CD4-positive, alpha-beta memory T cell (primary cell): ENCODE measurements at regions of chr6 and their contacts with region 1.

Region 1: GRCh38 chr6:44096612-44097011 is 30.6 kb downstream of the MRPL14 start:
- DNase-seq: peak; percentile 67 to 76 (median 70)
- H3K4me3 ChIP-seq: no peak overlapping the region
- H3K4me3 Mint-ChIP-seq: no peak overlapping the region
- H3K27ac ChIP-seq: no peak overlapping the region
- H3K27ac Mint-ChIP-seq: peak overlapping the region in 3 of 7 donors; percentile 5 to 77 (median 70)
- H3K4me1 ChIP-seq: no peaks in the 10 kb centered on the region
- H3K4me1 Mint-ChIP-seq: peaks cover under 1 to 7% (median 5%) of the 10 kb centered on the region in 4 donors
- H3K27me3 ChIP-seq: no peaks in the 10 kb centered on the region
- H3K27me3 Mint-ChIP-seq: no peaks in the 10 kb centered on the region

Region 2: GRCh38 chr6:44142835-44143234 is 46.2 kb after region 1 on chr6:
- CTCF ChIA-PET with region 1: interaction called, 11 read pairs
- POLR2A ChIA-PET with region 1: no interaction called
- intact Hi-C with region 1: no loop called
- DNase-seq: no peak
- H3K4me3 ChIP-seq: no peak overlapping the region
- H3K4me3 Mint-ChIP-seq: no peak overlapping the region
- H3K27ac ChIP-seq: no peak overlapping the region
- H3K27ac Mint-ChIP-seq: peak overlapping the region in 2 of 7 donors; percentile 22 to 71
- H3K4me1 ChIP-seq: no peaks in the 10 kb centered on the region
- H3K4me1 Mint-ChIP-seq: peaks cover 0 to 2% (median 0%) of the 10 kb centered on the region in 4 donors
- H3K27me3 ChIP-seq: no peaks in the 10 kb centered on the region
- H3K27me3 Mint-ChIP-seq: no peaks in the 10 kb centered on the region

Region 3: GRCh38 chr6:44151348-44152108 is 54.9 kb after region 1 on chr6:
- CTCF ChIA-PET with region 1: interaction called, 50 read pairs
- POLR2A ChIA-PET with region 1: interaction called, 3 read pairs
- intact Hi-C with region 1: loop called (anchors 1 kb)
- DNase-seq: peak; percentile 72 to 80 (median 72)
- H3K4me3 ChIP-seq: no peak overlapping the region
- H3K4me3 Mint-ChIP-seq: peak overlapping the region in 3 of 8 donors; percentile 43 to 73 (median 55)
- H3K27ac ChIP-seq: no peak overlapping the region
- H3K27ac Mint-ChIP-seq: peak overlapping the region in 4 of 7 donors; percentile 18 to 59 (median 28)
- H3K4me1 ChIP-seq: peaks cover 16% of the 10 kb centered on the region
- H3K4me1 Mint-ChIP-seq: peaks cover 5 to 12% (median 9%) of the 10 kb centered on the region in 4 donors
- H3K27me3 ChIP-seq: no peaks in the 10 kb centered on the region
- H3K27me3 Mint-ChIP-seq: no peaks in the 10 kb centered on the region

Region 4: GRCh38 chr6:44304282-44305199 is 207.9 kb after region 1 on chr6:
- CTCF ChIA-PET with region 1: no interaction called
- POLR2A ChIA-PET with region 1: no interaction called
- intact Hi-C with region 1: loop called (anchors 1 kb)
- DNase-seq: peak in 4 of 5 donors; percentile 30 to 37 (median 36)
- H3K4me3 ChIP-seq: no peak overlapping the region
- H3K4me3 Mint-ChIP-seq: no peak overlapping the region
- H3K27ac ChIP-seq: no peak overlapping the region
- H3K27ac Mint-ChIP-seq: peak overlapping the region in 2 of 7 donors; percentile 40 to 43
- H3K4me1 ChIP-seq: no peaks in the 10 kb centered on the region
- H3K4me1 Mint-ChIP-seq: peaks cover 0 to under 1% (median 0%) of the 10 kb centered on the region in 4 donors
- H3K27me3 ChIP-seq: no peaks in the 10 kb centered on the region
- H3K27me3 Mint-ChIP-seq: no peaks in the 10 kb centered on the region